IMR-90 (cell line): ENCODE measurements at regions of chr4 and their contacts with region 1.

Region 1: DNA sequence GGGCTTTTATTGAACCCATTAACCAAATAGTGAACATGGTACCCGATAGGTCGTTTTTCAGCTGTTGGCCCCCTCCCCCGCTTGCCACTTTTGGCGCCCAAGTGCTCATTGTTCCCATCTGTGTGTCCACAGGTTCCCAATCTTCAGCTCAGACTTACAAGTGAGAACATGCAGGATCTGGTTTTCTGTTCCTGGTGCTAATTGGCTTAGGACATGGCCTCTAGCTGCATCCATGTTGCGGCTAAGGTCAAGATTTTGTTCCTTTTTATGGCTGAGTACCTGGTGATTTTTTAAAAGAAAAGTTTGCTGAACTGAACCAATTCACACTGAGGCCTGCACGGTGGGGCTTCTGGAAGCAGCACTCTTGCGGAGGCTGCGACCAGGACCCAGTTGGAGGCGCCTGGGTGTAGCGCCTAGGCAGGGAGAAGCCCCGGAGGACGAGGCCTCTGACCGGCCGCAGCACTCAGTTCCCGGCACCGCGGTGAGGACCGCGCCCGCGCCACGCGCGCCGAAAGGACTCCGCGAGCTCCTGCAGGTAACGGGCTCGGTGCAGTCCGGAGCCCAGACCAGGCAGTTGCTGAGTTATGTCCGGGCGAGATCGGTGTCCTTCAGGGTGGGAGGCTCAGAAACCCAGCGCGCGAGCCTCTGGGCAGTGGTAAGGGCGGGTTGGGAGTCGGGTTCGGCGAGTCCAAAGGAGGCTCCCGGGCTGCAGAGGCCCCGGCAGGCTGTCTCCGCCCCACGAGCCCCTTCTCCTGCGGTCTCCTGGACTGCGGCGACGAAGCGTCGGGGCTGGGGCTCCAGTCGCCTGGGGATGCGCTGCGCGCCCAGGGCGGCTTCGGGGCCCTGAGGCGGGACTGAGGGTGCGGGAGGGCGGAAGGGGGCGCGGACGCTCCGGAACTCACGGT is 15.8 kb upstream of the SLC25A4 start:
- DNase-seq: no peak
- ATAC-seq: peak; percentile 69
- H3K4me3 ChIP-seq: peak overlapping the region; percentile 51
- H3K27ac ChIP-seq: no peak overlapping the region
- H3K4me1 ChIP-seq: no peaks in the 10 kb centered on the region; the same call in 1 of the 2 replicates
- H3K27me3 ChIP-seq: peaks cover 13% of the 10 kb centered on the region
- CTCF ChIP-seq: no peak
- POLR2A ChIP-seq: no peak
- RAD21 ChIP-seq: no peak

Region 2: GRCh38 chr4:185112104-185112503 is 15.2 kb before region 1 on chr4:
- CTCF ChIA-PET with region 1: no interaction called
- POLR2A ChIA-PET with region 1: no interaction called
- dilution Hi-C with region 1: no loop called
- in situ Hi-C with region 1: no loop called
- intact Hi-C with region 1: loop called (anchors 2 kb)
- DNase-seq: peak; percentile 96
- ATAC-seq: peak; percentile 97
- H3K4me3 ChIP-seq: no peak overlapping the region
- H3K27ac ChIP-seq: no peak overlapping the region
- H3K4me1 ChIP-seq: peaks cover 3% of the 10 kb centered on the region; the same call in 1 of the 2 replicates
- H3K27me3 ChIP-seq: no peaks in the 10 kb centered on the region
- CTCF ChIP-seq: no peak
- POLR2A ChIP-seq: no peak
- RAD21 ChIP-seq: no peak